Endothelial cell of umbilical vein (primary cell): ENCODE measurements at regions of chr14 and their contacts with region 1.

Region 1: DNA sequence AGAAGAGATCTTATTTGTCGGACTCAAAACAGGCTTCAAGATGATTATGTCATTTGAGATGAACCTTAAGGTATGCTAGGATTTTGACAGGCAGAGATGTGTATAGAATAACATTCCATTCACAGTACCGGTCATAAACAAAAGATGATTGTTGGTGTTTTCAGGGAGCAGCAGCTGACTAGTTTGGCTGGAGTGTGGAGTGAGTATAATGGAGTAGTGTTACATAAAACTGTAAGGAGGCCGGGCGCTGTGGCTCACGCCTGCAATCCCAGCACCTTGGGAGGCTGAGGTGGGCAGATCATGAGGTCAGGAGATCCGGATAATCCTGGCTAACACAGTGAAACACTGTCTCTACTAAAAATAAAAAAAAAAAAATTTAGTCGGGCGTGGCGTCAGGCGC is 23.9 kb downstream of the SERPINA10 start:
- DNase-seq: no peak
- H3K4me3 ChIP-seq: no peak overlapping the region
- H3K27ac ChIP-seq: no peak overlapping the region
- H3K4me1 ChIP-seq: no peaks in the 10 kb centered on the region
- H3K27me3 ChIP-seq: no peaks in the 10 kb centered on the region
- CTCF ChIP-seq: no peak
- POLR2A ChIP-seq: no peak

Region 2: GRCh38 chr14:94077111-94077821 is 191.9 kb before region 1 on chr14:
- CTCF ChIA-PET with region 1: no interaction called
- POLR2A ChIA-PET with region 1: no interaction called
- dilution Hi-C with region 1: no loop called
- intact Hi-C with region 1: no loop called
- DNase-seq: no peak
- H3K4me3 ChIP-seq: no peak overlapping the region
- H3K27ac ChIP-seq: no peak overlapping the region
- H3K4me1 ChIP-seq: peaks cover 29% of the 10 kb centered on the region
- H3K27me3 ChIP-seq: no peaks in the 10 kb centered on the region
- CTCF ChIP-seq: no peak
- POLR2A ChIP-seq: no peak

Region 3: GRCh38 chr14:94213021-94213420 is 56.1 kb before region 1 on chr14:
- CTCF ChIA-PET with region 1: no interaction called
- POLR2A ChIA-PET with region 1: no interaction called
- dilution Hi-C with region 1: loop called (anchors 10 kb)
- intact Hi-C with region 1: no loop called
- DNase-seq: no peak
- H3K4me3 ChIP-seq: no peak overlapping the region
- H3K27ac ChIP-seq: no peak overlapping the region
- H3K4me1 ChIP-seq: no peaks in the 10 kb centered on the region
- H3K27me3 ChIP-seq: no peaks in the 10 kb centered on the region
- CTCF ChIP-seq: no peak
- POLR2A ChIP-seq: no peak

Region 4: GRCh38 chr14:94282991-94283723 is 14.0 kb after region 1 on chr14:
- CTCF ChIA-PET with region 1: no interaction called
- POLR2A ChIA-PET with region 1: no interaction called
- dilution Hi-C with region 1: no loop called
- intact Hi-C with region 1: no loop called
- DNase-seq: no peak
- H3K4me3 ChIP-seq: no peak overlapping the region
- H3K27ac ChIP-seq: no peak overlapping the region
- H3K4me1 ChIP-seq: no peaks in the 10 kb centered on the region
- H3K27me3 ChIP-seq: no peaks in the 10 kb centered on the region
- CTCF ChIP-seq: no peak
- POLR2A ChIP-seq: no peak